Aorta (tissue), 5 donors: ENCODE measurements at regions of chrX and their contacts with region 1.

Region 1: DNA sequence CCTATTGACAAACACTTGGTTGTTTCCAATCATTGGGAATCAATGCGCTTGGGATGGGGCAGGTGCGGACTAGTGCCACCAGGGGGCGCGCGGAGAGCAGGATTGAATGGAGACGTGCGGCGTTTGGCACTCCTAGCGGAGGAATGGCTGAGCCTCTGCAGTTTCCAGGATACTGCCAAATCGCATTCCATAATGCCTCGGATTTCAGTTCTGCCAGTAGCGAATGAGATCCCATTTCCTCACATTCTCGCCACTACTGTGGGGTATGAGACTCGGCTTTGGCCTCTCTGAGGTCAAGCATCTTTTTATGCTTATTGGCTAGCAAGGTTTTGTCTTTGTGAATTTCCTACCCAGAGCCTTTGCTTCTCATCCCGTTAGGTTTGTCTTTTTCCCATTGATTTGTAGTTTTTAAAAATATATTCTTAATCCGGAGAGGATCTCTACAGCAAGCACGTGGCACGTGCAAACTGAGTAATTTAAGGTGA is 28.7 kb downstream of the CLDN34 start:
- DNase-seq: peak; percentile 88 to 95
- ATAC-seq: peak; percentile 94
- H3K4me3 ChIP-seq: no peak overlapping the region
- H3K27ac ChIP-seq: no peak overlapping the region
- H3K4me1 ChIP-seq: no peaks in the 10 kb centered on the region
- H3K27me3 ChIP-seq: no peaks in the 10 kb centered on the region

Region 2: GRCh38 chrX:9885150-9885549 is 110.7 kb before region 1 on chrX:
- intact Hi-C with region 1: loop called in 1 of 2 experiments (anchors 10 kb)
- DNase-seq: peak in 1 of 2 donors; percentile 78
- ATAC-seq: no peak
- H3K4me3 ChIP-seq: no peak overlapping the region
- H3K27ac ChIP-seq: no peak overlapping the region
- H3K4me1 ChIP-seq: no peaks in the 10 kb centered on the region
- H3K27me3 ChIP-seq: no peaks in the 10 kb centered on the region